ENCODE measurements at regions of chr12 and their contacts with region 1.

Region 1: GRCh38 chr12:14284184-14284722 is 81.2 kb upstream of the ATF7IP start:
- DNase-seq: no peak
- ATAC-seq: peak; percentile 36
- H3K4me3 Mint-ChIP-seq: peak overlapping the region; percentile 67
- H3K27ac Mint-ChIP-seq: peak overlapping the region; percentile 96
- H3K4me1 Mint-ChIP-seq: peaks cover 46% of the 10 kb centered on the region
- H3K27me3 Mint-ChIP-seq: no peaks in the 10 kb centered on the region
- CTCF ChIP-seq: no peak

Region 2: GRCh38 chr12:14216405-14217294 is 67.6 kb before region 1 on chr12:
- CTCF ChIA-PET with region 1: no interaction called
- POLR2A ChIA-PET with region 1: no interaction called
- intact Hi-C with region 1: loop called (anchors 2 kb)
- DNase-seq: no peak
- ATAC-seq: peak; percentile 62
- H3K4me3 Mint-ChIP-seq: peak overlapping the region; percentile 70
- H3K27ac Mint-ChIP-seq: peak overlapping the region; percentile 82
- H3K4me1 Mint-ChIP-seq: peaks cover 34% of the 10 kb centered on the region
- H3K27me3 Mint-ChIP-seq: no peaks in the 10 kb centered on the region
- CTCF ChIP-seq: no peak

Region 3: GRCh38 chr12:14272956-14273907 is 11.0 kb before region 1 on chr12:
- CTCF ChIA-PET with region 1: interaction called, 3 read pairs
- POLR2A ChIA-PET with region 1: interaction called, 18 read pairs
- intact Hi-C with region 1: loop called (anchors 1 kb)
- DNase-seq: no peak
- ATAC-seq: peak; percentile 68
- H3K4me3 Mint-ChIP-seq: peak overlapping the region; percentile 54
- H3K27ac Mint-ChIP-seq: peak overlapping the region; percentile 87
- H3K4me1 Mint-ChIP-seq: peaks cover 53% of the 10 kb centered on the region
- H3K27me3 Mint-ChIP-seq: no peaks in the 10 kb centered on the region
- CTCF ChIP-seq: no peak

Measured in activated B cell treated with CpG ODN at 0.5 μM for 24 hours (primary cell).